Left colon (tissue), 2 donors: ENCODE measurements at regions of chr9 and their contacts with region 1.

Region 1: GRCh38 chr9:136944519-136945279 is at the starts of genes C8G and FBXW5:
- DNase-seq: peak; percentile 93 to 94
- ATAC-seq: peak; percentile 72
- total RNA-seq, gene C8G: 3.9 to 8.3 TPM
- total RNA-seq, gene FBXW5: 167 to 195 TPM

Region 2: GRCh38 chr9:137029058-137029936 is 84.6 kb after region 1 on chr9:
- intact Hi-C with region 1: loop called in 1 of 2 experiments (anchors 10 kb)
- DNase-seq: peak; percentile 74 to 89
- ATAC-seq: peak; percentile 59